CD4-positive, alpha-beta T cell (primary cell): ENCODE measurements at regions of chr10 and their contacts with region 1.

Region 1: DNA sequence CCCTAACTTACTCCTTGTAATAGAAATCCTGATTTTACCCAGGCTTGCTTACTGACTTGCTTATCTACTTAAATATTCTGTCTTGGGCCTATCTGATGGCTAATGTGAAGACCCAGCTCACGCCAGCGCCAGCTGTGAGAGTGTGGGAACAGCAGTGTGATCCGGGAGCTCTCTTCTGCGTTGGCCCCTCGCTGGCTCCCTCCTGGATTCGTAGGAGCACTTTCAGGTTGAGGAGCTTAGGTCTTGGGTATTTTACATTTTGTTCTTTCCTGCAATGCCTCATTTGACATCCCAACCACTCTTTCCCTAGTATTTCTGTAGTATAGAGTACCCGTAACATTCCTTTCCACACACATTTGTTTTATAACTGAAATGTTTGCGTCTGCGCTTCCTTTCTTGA is 51.7 kb downstream of the CREM start:
- DNase-seq: no peak
- ATAC-seq: no peak
- H3K4me3 ChIP-seq: no peak overlapping the region
- H3K4me3 Mint-ChIP-seq: no peak overlapping the region
- H3K27ac ChIP-seq: no peak overlapping the region
- H3K27ac Mint-ChIP-seq: no peak overlapping the region
- H3K4me1 ChIP-seq: no peaks in the 10 kb centered on the region
- H3K4me1 Mint-ChIP-seq: no peaks in the 10 kb centered on the region
- H3K27me3 ChIP-seq: no peaks in the 10 kb centered on the region
- H3K27me3 Mint-ChIP-seq: no peaks in the 10 kb centered on the region
- CTCF ChIP-seq: no peak

Region 2: GRCh38 chr10:35136263-35136815 is 42.0 kb before region 1 on chr10:
- CTCF ChIA-PET with region 1: no interaction called
- POLR2A ChIA-PET with region 1: no interaction called
- intact Hi-C with region 1: loop called in 1 of 2 experiments (anchors 5 kb)
- DNase-seq: peak in 2 of 14 experiments; percentile 29 to 30
- ATAC-seq: no peak
- H3K4me3 ChIP-seq: no peak overlapping the region
- H3K4me3 Mint-ChIP-seq: peak overlapping the region; percentile 48
- H3K27ac ChIP-seq: peak overlapping the region in 1 of 2 donors; percentile 64
- H3K27ac Mint-ChIP-seq: peak overlapping the region; percentile 64
- H3K4me1 ChIP-seq: peaks cover 23% of the 10 kb centered on the region
- H3K4me1 Mint-ChIP-seq: peaks cover 40% of the 10 kb centered on the region
- H3K27me3 ChIP-seq: no peaks in the 10 kb centered on the region
- H3K27me3 Mint-ChIP-seq: no peaks in the 10 kb centered on the region
- CTCF ChIP-seq: no peak